ENCODE measurements at regions of chr13 and their contacts with region 1.

Region 1: GRCh38 chr13:49840266-49840665 is 47.8 kb upstream of the KPNA3 start:
- DNase-seq: no peak
- H3K4me3 ChIP-seq: no peak overlapping the region
- H3K4me1 ChIP-seq: no peaks in the 10 kb centered on the region
- H3K27me3 ChIP-seq: no peaks in the 10 kb centered on the region

Region 2: DNA sequence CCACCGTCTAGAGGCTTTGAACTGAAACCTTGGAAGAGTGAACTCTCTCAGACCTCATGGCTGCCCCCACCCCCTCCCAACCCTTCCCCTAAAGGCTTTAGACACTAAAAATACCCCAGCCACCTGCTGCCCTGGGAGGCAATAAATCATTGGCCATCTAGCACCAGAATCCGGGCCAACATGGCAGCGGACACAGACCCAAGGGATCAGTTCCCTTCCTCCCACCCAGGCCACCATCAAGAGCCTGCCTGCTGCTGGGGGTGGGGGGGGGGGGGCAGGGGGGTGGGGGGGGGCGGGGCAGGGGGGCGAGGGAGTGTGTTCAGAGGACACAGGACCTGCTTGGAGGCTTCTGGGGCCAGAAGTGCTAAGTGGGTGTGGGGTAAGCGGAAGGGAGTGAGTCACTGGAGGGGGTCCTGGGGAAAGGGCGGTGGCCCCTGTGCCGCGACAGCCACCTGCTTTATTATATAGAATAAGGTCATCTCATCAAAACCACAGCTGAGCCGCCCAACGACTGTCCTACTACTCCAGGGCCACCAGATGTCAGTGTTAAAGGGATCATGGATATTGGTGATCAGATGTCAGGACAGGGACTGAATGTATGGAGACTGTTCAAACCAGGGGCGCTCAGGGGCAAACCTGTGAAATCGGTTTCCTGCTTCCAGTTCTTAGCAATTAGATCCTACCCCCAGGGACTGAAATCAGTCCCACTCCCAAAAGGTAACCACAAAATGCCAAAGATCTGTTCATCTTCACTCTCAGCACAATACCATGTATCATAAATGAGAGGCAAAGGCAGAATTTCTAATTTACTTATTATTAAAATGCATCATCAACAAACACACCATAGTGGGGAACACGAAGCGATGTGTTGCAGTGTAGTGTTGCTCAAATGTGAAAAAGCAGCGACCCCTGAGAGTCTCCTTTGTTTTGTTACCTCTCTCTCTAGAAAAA is 187.6 kb before region 1 on chr13:
- in situ Hi-C with region 1: loop called (anchors 5 kb)
- DNase-seq: peak; percentile 65 to 70
- H3K4me3 ChIP-seq: no peak overlapping the region
- H3K4me1 ChIP-seq: no peaks in the 10 kb centered on the region
- H3K27me3 ChIP-seq: no peaks in the 10 kb centered on the region

Measured in HAP-1 (cell line).